ENCODE measurements at regions of chr2 and their contacts with region 1.

Region 1: DNA sequence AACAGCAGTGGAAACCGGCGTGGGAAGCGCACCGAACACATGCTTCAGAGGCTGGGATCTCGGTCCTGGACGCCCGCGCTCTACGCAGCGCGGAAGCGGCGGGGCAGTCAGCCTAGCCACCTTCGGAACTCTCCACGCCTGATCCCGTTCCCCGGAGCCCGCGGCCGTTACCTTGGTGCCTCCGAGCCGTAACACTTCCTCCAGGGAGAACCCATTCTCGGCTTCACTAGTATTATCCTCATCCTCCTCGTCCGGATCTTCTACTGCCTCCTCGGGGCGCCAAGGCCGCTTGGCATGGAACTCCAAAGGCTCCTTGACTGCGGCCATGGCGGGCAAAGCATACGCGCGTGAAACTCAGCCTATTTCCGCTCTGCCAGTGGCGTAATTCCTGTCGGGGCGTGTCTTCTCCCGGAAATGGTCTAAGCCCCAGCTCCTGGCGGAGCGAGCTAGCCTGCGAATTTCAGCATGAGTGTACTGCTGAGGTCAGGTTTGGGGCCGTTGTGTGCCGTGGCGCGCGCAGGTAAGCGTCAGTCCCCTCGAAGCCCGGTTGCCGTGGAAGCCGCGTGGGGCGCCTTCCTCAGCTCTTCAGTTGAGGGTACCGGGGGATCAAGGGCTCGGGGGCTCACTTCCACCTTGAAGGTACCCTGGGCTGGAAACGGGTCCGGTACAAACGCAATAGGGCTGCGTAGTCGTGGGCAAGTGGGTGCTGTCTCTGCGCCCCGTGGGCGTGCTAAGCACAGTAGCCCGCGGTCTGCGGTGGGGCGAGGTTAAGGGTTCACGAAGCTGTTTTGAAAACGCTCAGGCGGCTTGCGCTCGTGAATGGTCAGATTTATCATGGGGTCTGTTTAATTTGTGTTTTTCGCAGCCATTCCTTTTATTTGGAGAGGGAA is at the starts of genes CEBPZ and NDUFAF7:
- DNase-seq: peak; percentile 31 to 83
- H3K4me3 ChIP-seq: peak within 1 kb of the TSS; percentile 95 to 98 (median 96)
- H3K27ac ChIP-seq: peak within 1 kb of the TSS; percentile 76
- H3K4me1 ChIP-seq: peaks cover 7 to 19% (median 11%) of the 10 kb centered on the region in 4 experiments
- H3K27me3 ChIP-seq: no peaks in the 10 kb centered on the region
- CTCF ChIP-seq: peak in 1 of 3 experiments; percentile 0; a peak in 1 of 4 replicates
- EP300 ChIP-seq: no peak
- POLR2A ChIP-seq: peak in 1 of 2 experiments; percentile 75; a peak in 1 of 3 replicates
- RAD21 ChIP-seq: no peak
- total RNA-seq, gene CEBPZ: 186 and 201 TPM in 2 replicates
- total RNA-seq, gene NDUFAF7: 46.8 and 56.0 TPM in 2 replicates

Region 2: GRCh38 chr2:37156857-37157714 is 74.4 kb before region 1 on chr2 and contains the start of gene EIF2AK2:
- CTCF ChIA-PET with region 1: interaction called, 3 read pairs
- POLR2A ChIA-PET with region 1: interaction called, 15 read pairs
- DNase-seq: peak in 1 of 2 experiments; percentile 86
- H3K4me3 ChIP-seq: peak within 1 kb of the TSS; percentile 61 to 87 (median 70)
- H3K27ac ChIP-seq: no peak within 1 kb of the TSS
- H3K4me1 ChIP-seq: peaks cover 0 to 11% (median 8%) of the 10 kb centered on the region in 4 experiments; a peak in 6 of 7 replicates
- H3K27me3 ChIP-seq: no peaks in the 10 kb centered on the region
- CTCF ChIP-seq: no peak
- EP300 ChIP-seq: 0 out of 3 replicates have a peak, but pooled peaks of 1 of the 2 experiments have one; percentile 41
- POLR2A ChIP-seq: peak; percentile 11 to 54; a peak in 2 of 3 replicates
- RAD21 ChIP-seq: no peak
- total RNA-seq, gene EIF2AK2: 46.3 and 46.9 TPM in 2 replicates

Region 3: GRCh38 chr2:37215250-37215649 is 16.2 kb before region 1 on chr2:
- CTCF ChIA-PET with region 1: interaction called, 6 read pairs
- POLR2A ChIA-PET with region 1: interaction called, 14 read pairs
- DNase-seq: no peak
- H3K4me3 ChIP-seq: no peak overlapping the region
- H3K27ac ChIP-seq: no peak overlapping the region
- H3K4me1 ChIP-seq: no peaks in the 10 kb centered on the region
- H3K27me3 ChIP-seq: no peaks in the 10 kb centered on the region
- CTCF ChIP-seq: no peak
- EP300 ChIP-seq: no peak
- POLR2A ChIP-seq: no peak
- RAD21 ChIP-seq: no peak

Region 4: DNA sequence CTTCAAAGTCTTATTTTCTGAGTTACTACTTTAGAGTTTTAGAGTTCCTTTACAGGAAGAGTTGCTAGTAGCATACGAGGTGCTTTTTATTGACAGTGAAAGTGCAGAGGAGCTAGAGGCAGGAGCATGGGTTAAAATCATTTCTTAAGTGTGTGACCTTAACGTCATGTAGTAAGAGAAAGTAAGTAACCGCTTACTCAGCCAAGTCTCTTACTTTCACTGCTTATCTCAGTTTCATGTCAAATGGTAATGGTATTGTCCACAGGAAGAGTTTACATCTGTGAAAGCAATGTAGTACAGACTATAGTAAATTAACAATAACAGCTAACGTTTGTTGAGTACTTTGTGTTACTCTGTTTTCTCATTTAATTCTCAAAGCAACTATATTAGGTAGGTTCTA is 12.5 kb after region 1 on chr2:
- CTCF ChIA-PET with region 1: interaction called, 4 read pairs
- POLR2A ChIA-PET with region 1: interaction called, 10 read pairs
- DNase-seq: no peak
- H3K4me3 ChIP-seq: no peak overlapping the region
- H3K27ac ChIP-seq: no peak overlapping the region
- H3K4me1 ChIP-seq: no peaks in the 10 kb centered on the region
- H3K27me3 ChIP-seq: peaks cover 0 to 1% (median 0%) of the 10 kb centered on the region in 4 experiments; a peak in 1 of 7 replicates
- CTCF ChIP-seq: no peak
- EP300 ChIP-seq: no peak
- POLR2A ChIP-seq: no peak
- RAD21 ChIP-seq: no peak

Region 5: GRCh38 chr2:37262522-37262921 is 31.0 kb after region 1 on chr2:
- CTCF ChIA-PET with region 1: no interaction called
- POLR2A ChIA-PET with region 1: no interaction called
- DNase-seq: no peak
- H3K4me3 ChIP-seq: no peak overlapping the region
- H3K27ac ChIP-seq: no peak overlapping the region
- H3K4me1 ChIP-seq: no peaks in the 10 kb centered on the region
- H3K27me3 ChIP-seq: no peaks in the 10 kb centered on the region
- CTCF ChIP-seq: no peak
- EP300 ChIP-seq: no peak
- POLR2A ChIP-seq: no peak
- RAD21 ChIP-seq: no peak

Region 6: GRCh38 chr2:37283207-37283606 is 51.7 kb after region 1 on chr2:
- CTCF ChIA-PET with region 1: no interaction called
- POLR2A ChIA-PET with region 1: no interaction called
- DNase-seq: no peak
- H3K4me3 ChIP-seq: no peak overlapping the region
- H3K27ac ChIP-seq: no peak overlapping the region
- H3K4me1 ChIP-seq: no peaks in the 10 kb centered on the region
- H3K27me3 ChIP-seq: no peaks in the 10 kb centered on the region
- CTCF ChIP-seq: no peak
- EP300 ChIP-seq: no peak
- POLR2A ChIP-seq: no peak
- RAD21 ChIP-seq: no peak